Psoas muscle (tissue), 8 donors: ENCODE measurements at regions of chr20 and their contacts with region 1.

Region 1: DNA sequence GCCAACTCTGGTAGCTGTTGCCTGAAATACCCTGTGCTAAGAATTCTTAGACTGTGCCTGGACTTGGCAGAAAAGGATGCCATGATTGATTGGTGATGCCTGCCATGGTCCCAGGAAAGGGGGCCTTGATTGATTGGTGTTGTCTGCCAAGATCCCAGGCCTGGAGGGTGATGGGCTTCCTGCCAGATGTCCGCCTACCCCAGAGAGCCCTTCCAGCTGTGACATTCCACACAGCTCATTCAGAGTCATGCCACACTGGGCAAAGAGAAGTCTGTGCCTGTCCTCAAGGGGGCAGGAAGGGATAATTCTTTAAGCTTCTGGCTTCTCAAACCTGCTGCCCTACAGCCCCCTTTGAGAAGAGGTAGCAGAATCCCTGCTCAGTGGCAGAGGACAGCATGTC is 24.6 kb downstream of the RIMS4 start:
- DNase-seq: no peak
- ATAC-seq: no peak
- H3K4me3 ChIP-seq: no peak overlapping the region
- H3K27ac ChIP-seq: no peak overlapping the region
- H3K4me1 ChIP-seq: no peaks in the 10 kb centered on the region
- H3K27me3 ChIP-seq: peaks cover 0 to 4% (median 0%) of the 10 kb centered on the region in 3 donors
- CTCF ChIP-seq: no peak

Region 2: GRCh38 chr20:43426172-43426571 is 1359.6 kb before region 1 on chr20:
- intact Hi-C with region 1: loop called in 1 of 2 experiments (anchors 5 kb)
- DNase-seq: no peak
- ATAC-seq: no peak
- H3K4me3 ChIP-seq: no peak overlapping the region
- H3K27ac ChIP-seq: no peak overlapping the region
- H3K4me1 ChIP-seq: no peaks in the 10 kb centered on the region
- H3K27me3 ChIP-seq: peaks cover 0 to 4% (median 2%) of the 10 kb centered on the region in 3 donors
- CTCF ChIP-seq: no peak